ENCODE measurements at regions of chr16 and their contacts with region 1.

Region 1: GRCh38 chr16:56600398-56600999 is 7.9 kb upstream of the MT2A start:
- DNase-seq: no peak
- H3K4me3 ChIP-seq: no peak overlapping the region
- CTCF ChIP-seq: peak; percentile 65

Region 2: GRCh38 chr16:56190677-56191155 is 409.8 kb before region 1 on chr16:
- CTCF ChIA-PET with region 1: no interaction called
- POLR2A ChIA-PET with region 1: no interaction called
- DNase-seq: no peak
- H3K4me3 ChIP-seq: peak overlapping the region; percentile 57
- CTCF ChIP-seq: no peak

Region 3: DNA sequence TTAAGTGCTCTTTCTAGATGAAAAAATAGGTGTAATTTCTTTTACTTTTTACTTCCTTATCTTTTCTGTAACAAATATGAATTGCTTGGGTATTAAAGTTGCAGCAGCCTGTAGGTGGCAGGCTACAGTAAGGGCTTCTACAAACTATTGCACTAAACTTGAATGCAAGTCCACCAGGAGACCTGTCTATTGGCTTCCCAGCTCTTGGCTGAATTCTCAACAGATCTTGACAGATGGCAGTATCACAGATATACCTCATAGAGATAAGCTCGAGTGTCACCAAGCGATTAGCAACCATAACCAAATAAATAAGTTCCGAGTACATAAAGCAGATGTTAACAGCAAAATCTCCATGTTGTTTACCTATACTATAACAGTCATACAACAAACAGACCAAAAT is 86.5 kb before region 1 on chr16:
- CTCF ChIA-PET with region 1: interaction called, 74 read pairs
- POLR2A ChIA-PET with region 1: no interaction called
- DNase-seq: peak; percentile 16
- H3K4me3 ChIP-seq: no peak overlapping the region
- CTCF ChIP-seq: peak; percentile 58

Region 4: DNA sequence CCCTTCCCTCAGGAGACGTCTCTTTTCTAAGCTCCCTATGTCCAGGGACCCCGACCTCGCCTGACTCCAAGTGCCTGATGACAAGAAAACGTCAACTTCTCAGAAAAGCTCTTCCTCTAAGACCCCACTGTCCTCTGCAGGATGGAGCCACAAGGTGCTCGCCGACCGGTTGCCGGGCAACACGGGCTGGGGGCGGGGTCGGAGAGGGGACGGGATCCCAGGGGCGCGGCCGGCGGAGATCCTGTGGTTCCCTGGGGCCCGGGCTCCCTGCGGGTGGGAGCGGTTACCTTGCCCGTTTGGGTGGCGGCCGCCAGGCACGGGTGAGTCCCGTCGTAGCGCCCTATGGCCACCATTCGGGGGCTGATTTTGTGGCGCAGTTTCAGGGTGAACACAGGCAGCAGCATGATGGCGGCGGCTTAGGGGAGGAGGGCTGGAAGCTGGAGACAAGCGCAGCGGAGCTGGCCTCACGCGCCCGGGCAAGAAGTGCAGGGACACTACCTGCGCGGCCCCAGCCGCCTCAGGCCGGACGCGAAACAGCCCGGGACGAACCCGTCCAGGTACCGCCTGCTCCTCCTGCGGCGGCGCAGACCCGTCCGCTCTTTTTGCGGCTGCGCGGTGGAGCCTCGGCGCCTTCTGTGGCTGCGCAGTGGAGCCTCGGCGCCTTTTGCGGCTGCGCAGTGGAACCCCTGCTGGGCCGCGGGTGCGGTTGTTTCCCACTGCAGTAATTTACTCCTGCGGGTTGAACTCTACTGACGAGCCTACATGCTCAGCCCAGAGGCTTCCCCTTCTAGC is 80.8 kb before region 1 on chr16 and contains the start of gene BBS2:
- CTCF ChIA-PET with region 1: interaction called, 74 read pairs
- POLR2A ChIA-PET with region 1: no interaction called
- DNase-seq: no peak
- H3K4me3 ChIP-seq: peak within 1 kb of the TSS; percentile 92
- CTCF ChIP-seq: no peak

Region 5: DNA sequence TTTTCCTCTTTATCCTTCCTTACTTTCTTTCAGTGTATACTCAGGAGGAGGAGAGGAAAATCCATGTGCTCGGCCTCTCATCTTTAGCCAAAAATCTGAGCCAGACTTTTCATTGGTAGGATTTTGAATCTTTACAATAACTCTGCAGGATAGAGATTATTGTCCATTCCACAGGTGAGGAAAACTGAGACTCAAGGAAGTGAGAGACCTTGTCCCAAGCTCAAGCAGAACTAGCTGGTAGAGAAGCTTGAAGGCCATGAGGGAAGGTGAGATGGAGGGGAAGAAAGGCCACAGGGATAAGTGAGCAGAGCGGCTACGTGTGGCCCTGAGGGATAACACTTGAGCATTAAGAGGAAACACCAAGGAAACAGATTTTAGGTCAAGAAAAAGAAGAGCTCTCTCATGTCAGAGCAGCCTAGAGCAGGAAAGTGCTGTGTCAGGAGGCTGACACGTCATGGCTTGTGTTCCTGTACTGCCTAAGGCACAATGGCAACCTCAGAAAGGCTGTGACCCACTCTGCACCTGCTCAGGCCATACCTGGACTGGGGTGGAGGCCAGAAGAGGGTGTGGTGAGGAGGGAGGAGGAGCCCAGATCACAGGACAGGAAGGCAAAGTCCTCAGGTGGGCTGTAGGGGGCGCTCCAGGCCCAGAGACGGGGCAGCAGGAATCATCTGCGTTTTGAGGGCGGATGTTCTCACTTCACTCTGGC is 23.8 kb before region 1 on chr16:
- CTCF ChIA-PET with region 1: interaction called, 40 read pairs
- POLR2A ChIA-PET with region 1: no interaction called
- DNase-seq: no peak
- H3K4me3 ChIP-seq: no peak overlapping the region
- CTCF ChIP-seq: peak; percentile 76

Region 6: GRCh38 chr16:56583351-56584168 is 16.9 kb before region 1 on chr16:
- CTCF ChIA-PET with region 1: interaction called, 40 read pairs
- POLR2A ChIA-PET with region 1: no interaction called
- DNase-seq: no peak
- H3K4me3 ChIP-seq: no peak overlapping the region
- CTCF ChIP-seq: no peak

Region 7: GRCh38 chr16:56589141-56590039 is 11.1 kb before region 1 on chr16 and contains the start of gene MT3:
- CTCF ChIA-PET with region 1: interaction called, 29 read pairs
- POLR2A ChIA-PET with region 1: no interaction called
- DNase-seq: no peak
- H3K4me3 ChIP-seq: peak within 1 kb of the TSS; percentile 46
- CTCF ChIP-seq: no peak